Mammary epithelial cell (primary cell): ENCODE measurements at regions of chr11 and their contacts with region 1.

Region 1: GRCh38 chr11:15580056-15580774 is 465.5 kb downstream of the INSC start:
- DNase-seq: no peak
- H3K4me3 ChIP-seq: no peak overlapping the region
- H3K27ac ChIP-seq: no peak overlapping the region
- H3K4me1 ChIP-seq: no peaks in the 10 kb centered on the region
- H3K27me3 ChIP-seq: no peaks in the 10 kb centered on the region
- CTCF ChIP-seq: no peak

Region 2: DNA sequence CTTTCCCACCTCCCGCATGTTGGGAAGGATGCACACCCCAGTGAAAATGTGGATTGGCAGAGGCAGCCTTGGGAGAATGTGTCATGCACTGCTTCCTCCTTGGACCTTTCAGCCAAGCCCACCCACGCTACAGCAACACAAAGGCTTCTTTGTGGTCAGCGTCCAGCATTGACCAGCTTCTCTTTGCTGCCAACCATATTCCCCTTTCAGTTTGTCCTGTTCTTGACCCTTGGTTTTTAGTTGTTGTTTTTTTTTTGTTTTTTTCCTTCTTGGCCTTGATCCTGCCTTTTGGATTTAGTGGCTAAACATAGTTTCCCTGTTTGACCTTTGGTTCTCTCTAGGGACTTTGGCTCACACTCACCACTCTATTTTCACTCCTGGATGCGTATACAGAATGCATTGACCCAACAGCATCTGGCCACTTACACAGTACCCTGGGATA is 108.2 kb after region 1 on chr11:
- CTCF ChIA-PET with region 1: no interaction called
- dilution Hi-C with region 1: no loop called
- in situ Hi-C with region 1: loop called in 1 of 2 experiments (anchors 25 kb)
- intact Hi-C with region 1: no loop called
- DNase-seq: peak; percentile 55
- H3K4me3 ChIP-seq: no peak overlapping the region
- H3K27ac ChIP-seq: no peak overlapping the region
- H3K4me1 ChIP-seq: no peaks in the 10 kb centered on the region
- H3K27me3 ChIP-seq: no peaks in the 10 kb centered on the region
- CTCF ChIP-seq: no peak